Mammary epithelial cell (primary cell): ENCODE measurements at regions of chr1 and their contacts with region 1.

Region 1: DNA sequence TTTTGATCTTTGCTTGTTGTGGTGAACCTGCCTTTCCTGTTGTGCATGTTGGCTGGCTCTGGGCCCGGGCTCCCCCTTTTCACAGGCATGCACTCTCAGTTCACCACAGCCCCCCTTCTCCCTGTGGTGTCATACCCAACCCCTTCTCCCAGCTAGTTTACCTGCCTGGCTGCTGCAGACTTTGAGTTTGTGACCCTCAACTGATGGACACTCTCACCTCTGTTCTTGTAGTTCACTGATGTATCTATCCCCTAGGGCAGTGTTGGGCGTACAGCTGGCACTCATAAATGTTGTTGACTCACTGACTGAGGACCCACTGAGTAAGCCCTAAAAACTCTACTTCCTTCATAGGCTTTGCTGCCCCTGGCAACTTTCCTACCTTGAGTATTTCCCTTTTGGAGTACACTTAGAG is 54.9 kb downstream of the WDR64 start:
- DNase-seq: peak; percentile 92
- H3K4me3 ChIP-seq: no peak overlapping the region
- H3K27ac ChIP-seq: peak overlapping the region; percentile 25
- H3K4me1 ChIP-seq: peaks cover 47% of the 10 kb centered on the region
- H3K27me3 ChIP-seq: no peaks in the 10 kb centered on the region
- CTCF ChIP-seq: no peak

Region 2: GRCh38 chr1:241640029-241640818 is 66.7 kb before region 1 on chr1 and contains the starts of genes CHML and OPN3:
- CTCF ChIA-PET with region 1: no interaction called
- dilution Hi-C with region 1: no loop called
- in situ Hi-C with region 1: no loop called
- intact Hi-C with region 1: loop called (anchors 5 kb)
- DNase-seq: peak; percentile 83
- H3K4me3 ChIP-seq: peak within 1 kb of the TSS; percentile 91 to 99 (median 99)
- H3K27ac ChIP-seq: peak within 1 kb of the TSS; percentile 76
- H3K4me1 ChIP-seq: peaks cover 22% of the 10 kb centered on the region
- H3K27me3 ChIP-seq: no peaks in the 10 kb centered on the region
- CTCF ChIP-seq: peak in 1 of 2 donors; percentile 17
- total RNA-seq, gene CHML: 15.0 to 25.3 TPM
- total RNA-seq, gene OPN3: 21.3 to 36.5 TPM

Region 3: DNA sequence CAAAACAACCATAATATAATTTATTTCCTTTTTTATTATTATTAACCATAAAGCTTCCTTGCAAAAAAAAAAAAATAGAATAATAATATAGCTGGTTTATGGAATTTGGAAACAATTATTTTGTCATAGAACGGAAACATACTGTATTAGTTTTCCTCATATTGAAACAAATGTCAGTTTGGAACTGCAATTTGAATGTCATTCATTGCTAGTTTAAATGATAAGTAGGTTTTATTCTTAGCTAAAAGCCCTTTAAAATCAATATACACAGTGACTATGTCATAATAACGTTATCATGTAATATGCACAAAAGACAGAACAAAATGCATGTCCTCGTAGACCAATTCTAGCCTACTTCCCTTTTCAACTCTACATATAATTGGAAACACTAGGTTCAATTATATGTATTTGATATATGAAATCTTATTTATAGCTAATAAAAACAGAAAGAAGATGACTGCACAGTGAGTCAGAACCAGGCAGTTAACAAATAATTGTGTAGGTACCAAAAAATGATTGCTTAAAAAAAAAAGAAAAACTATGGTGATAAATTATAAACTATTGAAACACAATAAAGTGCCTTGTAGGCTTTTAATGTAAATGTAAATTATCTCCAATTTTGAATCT is 55.9 kb after region 1 on chr1:
- CTCF ChIA-PET with region 1: no interaction called
- dilution Hi-C with region 1: no loop called
- in situ Hi-C with region 1: no loop called
- intact Hi-C with region 1: no loop called
- DNase-seq: no peak
- H3K4me3 ChIP-seq: no peak overlapping the region
- H3K27ac ChIP-seq: no peak overlapping the region
- H3K4me1 ChIP-seq: no peaks in the 10 kb centered on the region
- H3K27me3 ChIP-seq: peaks cover 2% of the 10 kb centered on the region
- CTCF ChIP-seq: no peak